ENCODE measurements at regions of chr6 and their contacts with region 1.

Region 1: DNA sequence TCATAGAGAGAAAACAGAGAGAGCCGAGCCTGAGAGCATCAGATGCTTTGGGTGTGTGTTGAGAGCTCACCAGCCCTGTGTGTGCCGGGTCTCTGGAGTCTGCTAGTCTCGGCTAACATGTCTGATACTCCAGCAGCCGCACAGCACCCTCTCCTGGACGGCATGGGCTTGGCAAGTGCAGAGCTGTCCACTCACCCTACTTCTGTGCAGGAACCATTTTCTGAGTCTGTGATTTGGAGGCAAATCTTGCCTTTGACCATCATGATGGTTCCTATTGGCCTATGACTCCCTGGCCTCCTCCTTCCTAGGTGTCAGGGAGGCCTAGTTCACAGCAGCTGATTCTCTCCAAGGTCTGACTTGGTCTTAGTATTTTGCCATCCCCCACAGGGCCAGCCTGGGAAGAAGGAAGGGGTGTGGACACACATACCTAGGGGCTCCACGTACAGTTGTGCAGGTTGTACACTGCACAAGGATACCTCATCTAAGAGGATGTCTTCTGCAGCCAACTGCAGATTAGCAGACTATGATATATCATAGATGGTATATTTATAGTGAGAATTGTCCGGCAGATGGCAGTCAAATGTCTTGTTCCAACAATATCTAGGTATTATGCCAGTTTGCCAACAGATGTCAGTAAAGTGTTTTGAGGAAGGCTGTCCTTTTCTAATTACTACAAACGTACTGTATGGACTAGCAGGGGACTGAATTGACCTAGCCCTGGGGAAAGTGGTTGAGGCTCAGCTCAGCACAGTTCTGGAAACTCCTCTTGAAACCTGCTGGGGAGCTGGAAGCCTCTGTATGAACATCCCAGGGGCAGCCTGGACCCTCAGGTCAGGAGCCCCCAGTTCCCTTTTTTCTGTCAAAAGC is 13.0 kb downstream of the FGD2 start:
- DNase-seq: peak; percentile 81 to 92 (median 88)
- ATAC-seq: peak; percentile 94
- H3K4me3 ChIP-seq: no peak overlapping the region
- H3K4me3 Mint-ChIP-seq: no peak overlapping the region
- H3K27ac ChIP-seq: no peak overlapping the region
- H3K27ac Mint-ChIP-seq: peak overlapping the region; percentile 14
- H3K4me1 ChIP-seq: peaks cover 42% of the 10 kb centered on the region
- H3K4me1 Mint-ChIP-seq: peaks cover 42% of the 10 kb centered on the region
- H3K27me3 ChIP-seq: no peaks in the 10 kb centered on the region
- H3K27me3 Mint-ChIP-seq: no peaks in the 10 kb centered on the region
- CTCF ChIP-seq: peak; percentile 89

Region 2: GRCh38 chr6:36623547-36624459 is 394.6 kb before region 1 on chr6:
- CTCF ChIA-PET with region 1: no interaction called
- POLR2A ChIA-PET with region 1: no interaction called
- intact Hi-C with region 1: loop called in 1 of 2 experiments (anchors 10 kb)
- DNase-seq: peak; percentile 65 to 88 (median 74)
- ATAC-seq: peak; percentile 94
- H3K4me3 ChIP-seq: no peak overlapping the region
- H3K4me3 Mint-ChIP-seq: no peak overlapping the region
- H3K27ac ChIP-seq: no peak overlapping the region
- H3K27ac Mint-ChIP-seq: no peak overlapping the region
- H3K4me1 ChIP-seq: peaks cover 12% of the 10 kb centered on the region
- H3K4me1 Mint-ChIP-seq: peaks cover 6% of the 10 kb centered on the region
- H3K27me3 ChIP-seq: no peaks in the 10 kb centered on the region
- H3K27me3 Mint-ChIP-seq: no peaks in the 10 kb centered on the region
- CTCF ChIP-seq: peak; percentile 83

Region 3: DNA sequence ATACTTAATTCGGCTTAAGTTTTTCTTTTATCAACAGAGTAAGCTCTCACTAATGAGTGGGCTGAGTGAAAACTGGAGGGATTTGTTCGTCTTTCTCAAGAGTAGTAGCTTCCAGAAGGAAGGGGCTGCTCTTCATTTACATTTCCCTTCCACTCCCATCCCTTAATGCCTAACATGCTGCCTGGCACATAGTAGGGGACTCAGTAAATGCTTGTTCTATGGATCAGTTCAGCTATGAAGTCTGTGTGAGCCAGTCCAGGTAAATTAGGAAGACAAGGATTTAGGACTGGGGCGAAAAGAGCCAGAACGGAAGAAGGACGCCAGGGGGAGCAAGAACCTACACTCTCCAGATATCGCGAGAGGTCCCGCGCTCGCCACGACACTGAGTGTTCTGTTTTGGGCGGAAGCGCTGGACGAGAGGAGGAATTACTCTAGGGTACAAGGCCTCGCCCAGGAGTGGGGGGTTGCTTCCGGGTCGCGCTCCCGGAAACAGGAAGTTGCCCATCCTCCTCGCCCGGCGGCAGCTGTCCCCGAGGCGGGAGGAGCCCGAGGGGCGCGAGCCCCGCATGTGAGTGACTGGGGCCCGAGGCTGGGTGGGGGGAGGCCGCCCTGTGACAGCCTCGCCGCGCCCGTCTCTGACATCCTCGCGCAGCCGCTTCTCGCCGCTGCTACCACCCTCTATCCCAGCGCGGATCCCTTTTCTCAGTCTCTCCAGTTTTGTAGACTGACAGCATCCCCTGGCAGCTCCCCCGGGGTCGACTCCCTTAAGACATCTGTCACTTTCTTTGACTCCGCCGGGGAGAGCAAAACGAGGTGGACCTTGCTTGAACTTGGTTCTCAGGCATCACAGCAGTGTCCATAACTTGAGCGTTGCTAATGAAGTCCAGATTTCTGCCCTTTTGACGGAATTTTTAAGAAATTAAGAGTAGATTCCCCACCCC is 132.7 kb before region 1 on chr6 and contains the start of gene C6orf89:
- CTCF ChIA-PET with region 1: interaction called, 53 read pairs
- POLR2A ChIA-PET with region 1: interaction called, 17 read pairs
- intact Hi-C with region 1: loop called (anchors 1 kb)
- DNase-seq: peak; percentile 92 to 99 (median 97)
- ATAC-seq: peak; percentile 98
- H3K4me3 ChIP-seq: peak within 1 kb of the TSS; percentile 79
- H3K4me3 Mint-ChIP-seq: peak within 1 kb of the TSS; percentile 82
- H3K27ac ChIP-seq: peak within 1 kb of the TSS; percentile 73 to 83
- H3K27ac Mint-ChIP-seq: peak within 1 kb of the TSS; percentile 90
- H3K4me1 ChIP-seq: peaks cover 19% of the 10 kb centered on the region
- H3K4me1 Mint-ChIP-seq: peaks cover 41% of the 10 kb centered on the region
- H3K27me3 ChIP-seq: no peaks in the 10 kb centered on the region
- H3K27me3 Mint-ChIP-seq: no peaks in the 10 kb centered on the region
- CTCF ChIP-seq: peak; percentile 79
- total RNA-seq, gene C6orf89: 23.7 to 24.0 TPM

Region 4: GRCh38 chr6:36985808-36986703 is 32.4 kb before region 1 on chr6 and contains the start of gene MTCH1:
- CTCF ChIA-PET with region 1: interaction called, 9 read pairs
- POLR2A ChIA-PET with region 1: interaction called, 20 read pairs
- intact Hi-C with region 1: loop called (anchors 1 kb)
- DNase-seq: peak; percentile 73 to 96 (median 86)
- ATAC-seq: peak; percentile 85
- H3K4me3 ChIP-seq: peak within 1 kb of the TSS; percentile 90
- H3K4me3 Mint-ChIP-seq: peak within 1 kb of the TSS; percentile 99
- H3K27ac ChIP-seq: peak within 1 kb of the TSS; percentile 61 to 81
- H3K27ac Mint-ChIP-seq: no peak within 1 kb of the TSS
- H3K4me1 ChIP-seq: peaks cover 49% of the 10 kb centered on the region
- H3K4me1 Mint-ChIP-seq: peaks cover 23% of the 10 kb centered on the region
- H3K27me3 ChIP-seq: no peaks in the 10 kb centered on the region
- H3K27me3 Mint-ChIP-seq: no peaks in the 10 kb centered on the region
- CTCF ChIP-seq: no peak
- total RNA-seq, gene MTCH1: 231 to 239 TPM

Region 5: DNA sequence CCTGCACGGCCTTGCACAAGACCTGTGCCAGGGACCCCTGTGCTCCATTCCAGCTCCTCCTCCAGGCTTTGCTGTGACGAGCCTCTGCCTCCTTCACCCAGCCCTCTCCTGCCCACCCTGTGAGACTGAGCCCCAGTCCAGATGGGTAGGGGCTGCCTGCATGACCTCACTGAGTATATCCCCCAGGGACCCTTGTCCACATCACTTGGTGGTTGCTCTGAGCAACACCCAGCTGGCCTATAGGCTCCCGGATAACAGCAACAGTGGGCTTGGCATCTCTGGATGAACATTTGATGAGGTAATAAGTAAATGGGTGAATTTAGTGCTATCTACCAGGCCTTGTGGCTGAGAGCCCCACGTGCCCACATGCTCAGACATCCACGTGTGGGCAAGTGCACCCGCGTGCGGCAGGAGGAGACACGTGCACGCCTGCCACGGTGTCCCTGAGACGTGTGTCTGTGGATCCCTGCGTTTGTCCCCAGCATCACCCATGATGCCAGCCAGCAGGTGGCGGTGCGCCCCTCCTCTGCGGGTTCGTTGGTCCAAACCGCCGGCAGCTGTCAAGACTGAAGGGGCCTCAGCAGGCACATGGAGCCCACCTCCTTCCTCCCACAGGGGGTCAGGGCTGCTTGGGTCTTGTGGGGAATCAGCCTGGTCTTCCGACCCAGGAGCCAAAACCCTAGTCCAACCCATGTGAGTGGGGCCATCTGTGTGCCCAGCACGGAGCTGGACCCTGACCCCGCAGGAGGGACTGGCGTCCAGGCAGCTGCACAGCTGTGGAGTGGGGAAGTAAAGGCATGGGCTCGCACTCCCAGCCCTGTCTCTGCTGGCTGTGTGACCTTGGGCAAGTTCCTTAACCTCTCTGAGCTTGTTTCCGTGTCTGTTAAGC is 33.0 kb after region 1 on chr6:
- CTCF ChIA-PET with region 1: interaction called, 32 read pairs
- POLR2A ChIA-PET with region 1: interaction called, 25 read pairs
- intact Hi-C with region 1: loop called (anchors 2 kb)
- DNase-seq: peak; percentile 84 to 95 (median 90)
- ATAC-seq: peak; percentile 76
- H3K4me3 ChIP-seq: no peak overlapping the region
- H3K4me3 Mint-ChIP-seq: peak overlapping the region; percentile 76
- H3K27ac ChIP-seq: peak overlapping the region in 1 of 2 donors; percentile 78
- H3K27ac Mint-ChIP-seq: peak overlapping the region; percentile 92
- H3K4me1 ChIP-seq: peaks cover 59% of the 10 kb centered on the region
- H3K4me1 Mint-ChIP-seq: peaks cover 56% of the 10 kb centered on the region
- H3K27me3 ChIP-seq: no peaks in the 10 kb centered on the region
- H3K27me3 Mint-ChIP-seq: no peaks in the 10 kb centered on the region
- CTCF ChIP-seq: peak; percentile 90

Region 6: GRCh38 chr6:37068356-37069270 is 50.2 kb after region 1 on chr6:
- CTCF ChIA-PET with region 1: no interaction called
- POLR2A ChIA-PET with region 1: no interaction called
- intact Hi-C with region 1: no loop called
- DNase-seq: no peak
- ATAC-seq: no peak
- H3K4me3 ChIP-seq: no peak overlapping the region
- H3K4me3 Mint-ChIP-seq: no peak overlapping the region
- H3K27ac ChIP-seq: no peak overlapping the region
- H3K27ac Mint-ChIP-seq: no peak overlapping the region
- H3K4me1 ChIP-seq: peaks cover 8% of the 10 kb centered on the region
- H3K4me1 Mint-ChIP-seq: peaks cover 7% of the 10 kb centered on the region
- H3K27me3 ChIP-seq: no peaks in the 10 kb centered on the region
- H3K27me3 Mint-ChIP-seq: no peaks in the 10 kb centered on the region
- CTCF ChIP-seq: no peak

Region 7: GRCh38 chr6:37222125-37222967 is 203.9 kb after region 1 on chr6:
- CTCF ChIA-PET with region 1: interaction called, 13 read pairs
- POLR2A ChIA-PET with region 1: interaction called, 3 read pairs
- intact Hi-C with region 1: no loop called
- DNase-seq: peak; percentile 40 to 87 (median 60)
- ATAC-seq: peak; percentile 95
- H3K4me3 ChIP-seq: peak overlapping the region; percentile 85
- H3K4me3 Mint-ChIP-seq: peak overlapping the region; percentile 90
- H3K27ac ChIP-seq: no peak overlapping the region
- H3K27ac Mint-ChIP-seq: no peak overlapping the region
- H3K4me1 ChIP-seq: peaks cover 13% of the 10 kb centered on the region
- H3K4me1 Mint-ChIP-seq: peaks cover 14% of the 10 kb centered on the region
- H3K27me3 ChIP-seq: no peaks in the 10 kb centered on the region
- H3K27me3 Mint-ChIP-seq: no peaks in the 10 kb centered on the region
- CTCF ChIP-seq: no peak